ENCODE measurements at regions of chr20 and their contacts with region 1.

Region 1: DNA sequence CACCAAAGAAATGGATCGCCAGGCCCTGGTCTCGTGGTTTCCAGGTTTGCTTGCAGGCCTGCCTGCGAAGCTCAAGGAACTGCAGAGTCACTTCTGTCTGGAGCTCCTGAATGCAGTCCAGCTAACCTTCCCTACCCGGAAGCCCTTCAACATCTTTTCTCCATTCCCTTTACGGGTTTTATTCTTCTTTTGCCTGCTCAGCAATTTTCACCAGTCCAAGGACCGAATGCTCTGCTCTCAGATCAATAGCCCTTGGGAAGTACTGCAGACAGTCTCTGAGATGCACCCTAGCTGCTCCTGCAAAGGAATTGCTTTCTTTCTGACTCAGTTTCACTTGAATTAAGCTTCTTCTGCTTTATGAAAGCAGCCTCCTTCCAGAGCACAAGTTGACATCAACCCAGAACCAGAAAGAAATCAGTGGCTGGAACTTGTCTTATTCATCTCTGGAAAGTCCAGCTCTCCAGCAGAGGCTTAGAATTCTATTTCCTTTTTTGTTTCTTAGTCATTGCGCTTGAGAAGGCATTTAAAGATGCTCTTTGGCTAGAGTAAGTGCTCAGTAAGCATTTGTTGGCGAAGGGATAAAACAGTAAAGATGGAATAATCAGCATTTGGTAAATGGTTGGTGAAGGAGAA is 18.7 kb upstream of the YWHAB start:
- DNase-seq: no peak
- H3K4me3 ChIP-seq: no peak overlapping the region
- H3K4me3 Mint-ChIP-seq: no peak overlapping the region
- H3K27ac Mint-ChIP-seq: no peak overlapping the region
- H3K4me1 ChIP-seq: peaks cover 11% of the 10 kb centered on the region
- H3K4me1 Mint-ChIP-seq: peaks cover 14% of the 10 kb centered on the region
- H3K27me3 ChIP-seq: no peaks in the 10 kb centered on the region
- H3K27me3 Mint-ChIP-seq: peaks cover 11% of the 10 kb centered on the region
- CTCF ChIP-seq: no peak

Region 2: DNA sequence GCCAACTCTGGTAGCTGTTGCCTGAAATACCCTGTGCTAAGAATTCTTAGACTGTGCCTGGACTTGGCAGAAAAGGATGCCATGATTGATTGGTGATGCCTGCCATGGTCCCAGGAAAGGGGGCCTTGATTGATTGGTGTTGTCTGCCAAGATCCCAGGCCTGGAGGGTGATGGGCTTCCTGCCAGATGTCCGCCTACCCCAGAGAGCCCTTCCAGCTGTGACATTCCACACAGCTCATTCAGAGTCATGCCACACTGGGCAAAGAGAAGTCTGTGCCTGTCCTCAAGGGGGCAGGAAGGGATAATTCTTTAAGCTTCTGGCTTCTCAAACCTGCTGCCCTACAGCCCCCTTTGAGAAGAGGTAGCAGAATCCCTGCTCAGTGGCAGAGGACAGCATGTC is 81.0 kb before region 1 on chr20:
- CTCF ChIA-PET with region 1: interaction called, 17 read pairs
- POLR2A ChIA-PET with region 1: no interaction called
- intact Hi-C with region 1: loop called (anchors 2 kb)
- DNase-seq: peak; percentile 37
- H3K4me3 ChIP-seq: no peak overlapping the region
- H3K4me3 Mint-ChIP-seq: no peak overlapping the region
- H3K27ac Mint-ChIP-seq: no peak overlapping the region
- H3K4me1 ChIP-seq: no peaks in the 10 kb centered on the region
- H3K4me1 Mint-ChIP-seq: no peaks in the 10 kb centered on the region
- H3K27me3 ChIP-seq: no peaks in the 10 kb centered on the region
- H3K27me3 Mint-ChIP-seq: peaks cover 8% of the 10 kb centered on the region
- CTCF ChIP-seq: peak; percentile 20 to 31

Region 3: DNA sequence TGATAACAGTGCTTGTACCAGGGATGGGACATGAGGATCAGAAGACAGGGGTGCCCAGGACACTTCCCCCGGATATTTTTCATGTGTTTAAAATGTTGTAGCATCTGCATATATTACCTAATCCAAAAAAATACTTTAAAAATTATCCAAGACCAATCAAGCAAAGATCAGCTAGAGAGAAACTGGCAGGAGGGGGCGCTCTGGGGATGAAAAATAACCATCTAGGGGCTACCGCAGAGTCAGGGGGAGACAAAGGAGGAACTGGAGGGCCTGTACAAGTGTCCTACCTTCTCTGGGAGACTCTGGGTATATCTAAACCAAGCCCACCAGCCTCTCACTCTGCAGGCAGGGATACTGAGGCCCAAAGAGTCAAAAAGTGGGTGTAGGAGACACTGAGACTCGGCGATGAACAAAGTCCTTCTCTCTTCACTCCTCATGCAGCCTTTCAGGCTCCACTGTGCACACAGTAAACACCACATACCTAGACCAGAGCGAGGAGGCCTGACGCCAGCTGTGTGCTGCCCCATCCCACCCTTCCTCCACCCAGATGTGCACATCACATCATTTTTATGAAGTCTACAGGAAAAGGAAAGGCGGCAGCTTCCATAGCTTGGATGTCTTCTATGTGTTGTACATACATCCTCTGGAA is 66.3 kb before region 1 on chr20:
- CTCF ChIA-PET with region 1: interaction called, 5 read pairs
- POLR2A ChIA-PET with region 1: no interaction called
- intact Hi-C with region 1: loop called (anchors 1 kb)
- DNase-seq: peak in 1 of 2 experiments; percentile 35
- H3K4me3 ChIP-seq: no peak overlapping the region
- H3K4me3 Mint-ChIP-seq: no peak overlapping the region
- H3K27ac Mint-ChIP-seq: no peak overlapping the region
- H3K4me1 ChIP-seq: no peaks in the 10 kb centered on the region
- H3K4me1 Mint-ChIP-seq: no peaks in the 10 kb centered on the region
- H3K27me3 ChIP-seq: no peaks in the 10 kb centered on the region
- H3K27me3 Mint-ChIP-seq: peaks cover 4% of the 10 kb centered on the region
- CTCF ChIP-seq: peak; percentile 59 to 62

Region 4: GRCh38 chr20:45187662-45188061 is 320.8 kb after region 1 on chr20:
- CTCF ChIA-PET with region 1: no interaction called
- POLR2A ChIA-PET with region 1: no interaction called
- intact Hi-C with region 1: no loop called
- DNase-seq: no peak
- H3K4me3 ChIP-seq: no peak overlapping the region
- H3K4me3 Mint-ChIP-seq: no peak overlapping the region
- H3K27ac Mint-ChIP-seq: no peak overlapping the region
- H3K4me1 ChIP-seq: no peaks in the 10 kb centered on the region
- H3K4me1 Mint-ChIP-seq: no peaks in the 10 kb centered on the region
- H3K27me3 ChIP-seq: peaks cover 2% of the 10 kb centered on the region
- H3K27me3 Mint-ChIP-seq: peaks cover 6% of the 10 kb centered on the region
- CTCF ChIP-seq: no peak

Measured in Caco-2 (cell line).